Natural killer cell (primary cell): ENCODE measurements at regions of chr15 and their contacts with region 1.

Region 1: GRCh38 chr15:77040673-77041072 is 30.2 kb downstream of the TSPAN3 start:
- DNase-seq: no peak
- ATAC-seq: peak in 2 of 3 donors; percentile 27 to 51
- H3K4me3 ChIP-seq: no peak overlapping the region
- H3K4me3 Mint-ChIP-seq: peak overlapping the region; percentile 66
- H3K27ac ChIP-seq: no peak overlapping the region
- H3K27ac Mint-ChIP-seq: peak overlapping the region; percentile 86 to 97
- H3K4me1 ChIP-seq: peaks cover 5% of the 10 kb centered on the region
- H3K4me1 Mint-ChIP-seq: peaks cover 34 to 65% of the 10 kb centered on the region in 2 donors
- H3K27me3 ChIP-seq: no peaks in the 10 kb centered on the region
- H3K27me3 Mint-ChIP-seq: no peaks in the 10 kb centered on the region
- CTCF ChIP-seq: no peak

Region 2: DNA sequence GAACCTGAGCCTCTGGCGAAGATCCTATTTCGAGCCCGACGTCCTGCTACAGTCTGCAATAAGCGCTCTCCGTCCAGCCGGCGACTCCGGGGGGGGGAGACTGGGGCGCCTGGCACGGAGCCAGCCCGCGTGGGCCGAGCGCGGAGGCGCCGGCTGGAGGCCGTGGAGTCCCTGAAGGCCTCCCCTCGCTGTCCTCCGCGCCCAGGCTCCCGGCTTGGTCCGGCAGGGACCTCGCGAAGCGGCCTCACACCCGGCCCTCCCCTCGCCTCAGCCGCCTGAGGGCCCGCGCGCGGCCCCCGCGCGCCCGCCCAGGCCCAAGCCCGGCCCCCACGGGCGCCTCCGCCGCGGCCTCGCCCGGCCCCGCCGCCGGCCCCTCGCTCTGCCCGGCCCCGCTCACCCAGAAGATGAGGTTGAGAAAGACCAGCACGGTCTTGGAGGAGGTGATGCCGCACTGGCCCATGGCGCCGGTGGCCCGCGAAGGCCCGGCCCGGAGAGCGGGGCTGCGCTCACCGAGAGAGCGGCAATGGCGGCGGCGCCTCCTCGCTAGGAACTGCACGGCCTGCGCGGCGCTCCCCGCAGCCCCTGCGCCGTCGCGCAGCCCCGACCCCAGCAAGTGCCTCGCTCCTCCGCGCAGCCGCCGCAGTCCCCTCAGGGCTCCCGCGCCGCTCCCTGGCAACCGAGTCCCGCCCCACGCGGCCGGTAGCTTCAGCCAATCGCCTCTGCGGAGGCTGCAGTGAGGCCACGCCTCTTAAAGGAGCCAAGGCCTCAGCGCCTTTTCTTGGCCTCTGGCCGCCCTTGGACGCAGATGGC is 30.0 kb after region 1 on chr15 and contains the start of gene TSPAN3:
- intact Hi-C with region 1: loop called (anchors 2 kb)
- DNase-seq: peak; percentile 88 to 95
- ATAC-seq: peak; percentile 97 to 98 (median 97)
- H3K4me3 ChIP-seq: peak within 1 kb of the TSS; percentile 64
- H3K4me3 Mint-ChIP-seq: peak within 1 kb of the TSS; percentile 88
- H3K27ac ChIP-seq: peak within 1 kb of the TSS; percentile 66
- H3K27ac Mint-ChIP-seq: peak within 1 kb of the TSS; percentile 65 to 90
- H3K4me1 ChIP-seq: peaks cover 16% of the 10 kb centered on the region
- H3K4me1 Mint-ChIP-seq: peaks cover 39 to 40% of the 10 kb centered on the region in 2 donors
- H3K27me3 ChIP-seq: no peaks in the 10 kb centered on the region
- H3K27me3 Mint-ChIP-seq: no peaks in the 10 kb centered on the region
- CTCF ChIP-seq: no peak
- total RNA-seq, gene TSPAN3: 18.7 to 37.4 (median 29.9) TPM

Region 3: DNA sequence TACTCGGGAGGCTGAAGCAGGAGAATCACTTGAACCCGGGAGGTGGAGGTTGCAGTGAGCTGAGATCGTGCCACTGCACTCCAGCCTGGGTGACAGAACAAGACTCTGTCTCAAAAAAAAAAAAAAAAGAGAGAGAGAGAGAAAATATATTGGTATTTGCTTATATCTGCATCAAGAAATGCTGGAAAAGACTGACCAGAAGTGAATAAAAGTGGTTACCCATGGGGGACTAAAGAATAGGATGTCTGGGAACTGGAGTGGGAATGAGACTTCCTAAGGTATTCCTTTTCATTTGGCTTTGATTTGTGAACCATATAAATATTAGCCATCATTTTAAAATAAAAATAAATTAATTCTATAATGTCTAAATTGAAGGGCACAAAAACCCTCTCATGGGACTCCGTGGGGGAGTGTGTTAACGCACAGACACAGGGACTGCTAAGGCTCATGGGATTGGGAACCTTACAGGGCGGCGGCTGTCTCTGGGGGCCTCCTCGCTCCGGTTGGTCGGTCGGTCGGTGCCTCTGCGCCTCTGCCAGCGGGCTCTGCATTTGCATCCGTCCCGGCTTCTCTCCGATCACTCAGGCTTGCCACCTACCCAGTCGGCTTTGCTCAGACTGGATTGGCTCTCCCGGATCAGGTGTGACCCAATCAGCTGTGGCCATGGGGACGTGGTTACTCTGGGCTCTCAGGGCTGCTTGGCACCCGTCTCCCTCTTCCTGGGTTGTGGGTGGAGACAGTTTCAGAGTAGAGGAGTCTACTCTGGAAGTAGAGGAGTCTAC is 42.9 kb after region 1 on chr15:
- intact Hi-C with region 1: no loop called
- DNase-seq: peak; percentile 35 to 86
- ATAC-seq: peak; percentile 83 to 94 (median 92)
- H3K4me3 ChIP-seq: peak overlapping the region; percentile 31
- H3K4me3 Mint-ChIP-seq: peak overlapping the region; percentile 81
- H3K27ac ChIP-seq: peak overlapping the region; percentile 53
- H3K27ac Mint-ChIP-seq: peak overlapping the region; percentile 27 to 58
- H3K4me1 ChIP-seq: peaks cover 28% of the 10 kb centered on the region
- H3K4me1 Mint-ChIP-seq: peaks cover 16 to 17% of the 10 kb centered on the region in 2 donors
- H3K27me3 ChIP-seq: no peaks in the 10 kb centered on the region
- H3K27me3 Mint-ChIP-seq: peaks cover 0 to 3% of the 10 kb centered on the region in 2 donors
- CTCF ChIP-seq: no peak

Region 4: DNA sequence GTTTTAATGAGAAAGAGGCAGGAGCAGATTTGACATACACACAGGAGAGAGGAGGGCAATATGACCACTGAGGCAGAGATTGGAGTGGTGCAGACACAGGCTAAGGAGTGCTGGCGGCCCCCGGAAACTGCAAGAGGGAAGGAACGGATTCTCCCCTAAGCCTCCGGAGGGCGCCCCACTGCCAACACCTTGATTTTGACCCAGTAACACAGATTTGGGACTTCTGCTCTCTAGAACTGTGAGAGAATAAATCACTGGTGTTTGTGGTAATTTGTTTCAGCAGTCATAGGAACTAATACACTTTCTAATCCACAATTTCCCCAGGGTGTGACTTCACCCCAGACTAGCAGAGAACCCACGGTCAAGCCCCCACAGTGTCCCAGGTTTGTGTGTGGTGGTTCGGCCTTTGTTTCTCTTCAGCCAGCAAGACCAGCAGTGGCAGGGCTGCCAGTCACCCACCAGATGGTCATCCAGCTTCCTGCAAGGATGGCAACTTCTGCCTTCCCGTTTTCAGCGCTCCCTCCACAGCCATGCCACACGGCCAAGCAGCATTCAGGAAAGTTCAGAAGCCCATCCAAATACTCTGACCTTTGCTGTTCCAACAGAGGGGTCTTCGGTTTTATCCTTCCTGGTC is 53.8 kb after region 1 on chr15:
- intact Hi-C with region 1: no loop called
- DNase-seq: no peak
- ATAC-seq: no peak
- H3K4me3 ChIP-seq: no peak overlapping the region
- H3K4me3 Mint-ChIP-seq: no peak overlapping the region
- H3K27ac ChIP-seq: no peak overlapping the region
- H3K27ac Mint-ChIP-seq: no peak overlapping the region
- H3K4me1 ChIP-seq: no peaks in the 10 kb centered on the region
- H3K4me1 Mint-ChIP-seq: no peaks in the 10 kb centered on the region
- H3K27me3 ChIP-seq: no peaks in the 10 kb centered on the region
- H3K27me3 Mint-ChIP-seq: no peaks in the 10 kb centered on the region
- CTCF ChIP-seq: no peak

Region 5: DNA sequence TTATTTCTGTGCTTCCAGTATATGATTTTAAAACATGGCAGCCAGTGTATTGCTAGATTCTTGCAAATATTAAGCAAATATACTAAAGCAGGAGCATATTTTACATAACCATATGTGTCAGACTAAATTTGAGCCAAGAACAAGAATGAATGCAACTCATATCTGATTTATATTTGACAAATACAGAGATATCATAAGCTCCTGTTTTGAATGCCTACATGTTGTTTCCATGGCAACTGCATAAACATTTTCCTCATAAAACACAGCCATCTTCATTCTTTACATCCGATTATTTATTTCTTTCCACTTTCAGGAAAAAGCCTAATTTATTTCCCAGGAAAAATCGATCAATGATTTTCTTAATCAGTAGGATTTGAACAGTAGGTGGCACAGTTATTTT is 202.5 kb after region 1 on chr15:
- intact Hi-C with region 1: no loop called
- DNase-seq: no peak
- ATAC-seq: no peak
- H3K4me3 ChIP-seq: no peak overlapping the region
- H3K4me3 Mint-ChIP-seq: no peak overlapping the region
- H3K27ac ChIP-seq: no peak overlapping the region
- H3K27ac Mint-ChIP-seq: no peak overlapping the region
- H3K4me1 ChIP-seq: no peaks in the 10 kb centered on the region
- H3K4me1 Mint-ChIP-seq: peaks cover 0 to 4% of the 10 kb centered on the region in 2 donors
- H3K27me3 ChIP-seq: no peaks in the 10 kb centered on the region
- H3K27me3 Mint-ChIP-seq: no peaks in the 10 kb centered on the region
- CTCF ChIP-seq: no peak